ENCODE measurements at regions of chr3 and their contacts with region 1.

Region 1: DNA sequence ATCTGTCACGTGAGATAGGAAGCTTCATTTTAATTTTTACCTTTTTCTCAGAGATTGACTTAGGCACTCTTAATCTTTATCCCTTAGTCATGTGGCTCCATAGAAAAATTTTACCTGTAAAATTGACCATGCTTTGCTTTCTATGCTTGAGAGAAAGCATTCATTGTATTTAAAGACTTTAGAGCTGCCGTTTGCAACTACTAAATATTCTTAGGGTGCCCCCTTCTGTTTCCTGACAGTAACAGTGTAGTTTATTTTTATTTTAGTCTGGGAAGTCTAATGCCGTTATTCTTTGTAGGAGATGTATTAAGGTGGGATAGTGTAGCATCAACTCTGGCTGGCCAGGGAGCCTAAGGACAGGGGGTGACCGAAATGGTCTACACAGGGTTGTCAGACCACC is 84.5 kb upstream of the SYNPR start:
- DNase-seq: no peak
- ATAC-seq: no peak
- H3K4me3 Mint-ChIP-seq: no peak overlapping the region
- H3K27ac Mint-ChIP-seq: no peak overlapping the region
- H3K4me1 Mint-ChIP-seq: no peaks in the 10 kb centered on the region
- H3K27me3 Mint-ChIP-seq: peaks cover 5% of the 10 kb centered on the region
- CTCF ChIP-seq: no peak

Region 2: DNA sequence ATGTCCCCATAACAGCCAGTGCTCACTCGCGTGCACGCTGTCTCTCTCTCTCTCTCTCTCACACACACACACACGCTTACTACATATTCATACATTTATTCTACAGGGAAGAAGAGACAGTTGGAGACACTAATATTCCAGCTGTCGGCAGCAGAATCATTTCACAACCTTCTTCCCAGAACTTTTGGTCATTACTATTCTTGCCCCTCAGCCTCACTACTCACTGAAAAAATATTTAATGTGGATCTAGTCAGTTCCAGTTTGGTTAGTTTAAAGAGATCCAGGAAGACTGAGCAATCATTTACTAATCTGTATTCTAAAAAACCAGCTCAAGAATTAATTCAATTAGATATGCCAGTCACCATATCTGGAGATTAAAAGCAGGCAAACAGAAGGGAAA is 1237.4 kb before region 1 on chr3:
- CTCF ChIA-PET with region 1: no interaction called
- POLR2A ChIA-PET with region 1: no interaction called
- intact Hi-C with region 1: no loop called
- DNase-seq: no peak
- ATAC-seq: no peak
- H3K4me3 Mint-ChIP-seq: no peak overlapping the region
- H3K27ac Mint-ChIP-seq: no peak overlapping the region
- H3K4me1 Mint-ChIP-seq: no peaks in the 10 kb centered on the region
- H3K27me3 Mint-ChIP-seq: no peaks in the 10 kb centered on the region
- CTCF ChIP-seq: no peak

Region 3: DNA sequence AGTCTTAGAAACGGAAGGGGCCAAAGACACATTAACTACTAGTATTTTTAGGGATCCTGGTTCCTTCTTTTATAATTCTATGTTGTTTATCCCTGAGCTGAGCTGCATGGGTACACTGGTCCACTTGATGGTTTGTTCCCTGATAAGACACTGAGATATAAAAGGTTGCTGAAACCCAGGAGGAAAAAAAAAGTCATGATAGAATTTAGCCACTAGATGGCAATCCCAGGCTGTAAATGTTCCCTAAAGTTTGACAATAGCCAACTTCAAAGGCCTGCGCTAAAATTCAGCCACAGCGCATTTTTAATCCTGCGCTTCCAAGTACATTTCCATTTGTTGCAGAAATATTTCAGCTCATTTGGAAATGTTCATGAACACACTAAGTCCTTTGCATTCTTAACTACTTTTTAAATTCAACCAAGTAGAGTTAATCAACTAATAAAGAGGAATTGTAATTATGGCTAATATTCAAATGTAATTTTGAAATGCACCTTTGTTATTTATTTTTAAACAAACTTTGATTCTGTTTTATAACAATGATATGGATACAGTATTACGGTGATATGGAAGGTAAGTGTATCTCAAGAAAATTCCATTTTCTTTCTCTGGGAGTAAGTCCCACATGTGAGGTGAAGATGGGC is 571.0 kb before region 1 on chr3:
- CTCF ChIA-PET with region 1: no interaction called
- POLR2A ChIA-PET with region 1: no interaction called
- intact Hi-C with region 1: loop called (anchors 2 kb)
- DNase-seq: no peak
- ATAC-seq: no peak
- H3K4me3 Mint-ChIP-seq: no peak overlapping the region
- H3K27ac Mint-ChIP-seq: no peak overlapping the region
- H3K4me1 Mint-ChIP-seq: peaks cover 2% of the 10 kb centered on the region
- H3K27me3 Mint-ChIP-seq: no peaks in the 10 kb centered on the region
- CTCF ChIP-seq: no peak

Region 4: DNA sequence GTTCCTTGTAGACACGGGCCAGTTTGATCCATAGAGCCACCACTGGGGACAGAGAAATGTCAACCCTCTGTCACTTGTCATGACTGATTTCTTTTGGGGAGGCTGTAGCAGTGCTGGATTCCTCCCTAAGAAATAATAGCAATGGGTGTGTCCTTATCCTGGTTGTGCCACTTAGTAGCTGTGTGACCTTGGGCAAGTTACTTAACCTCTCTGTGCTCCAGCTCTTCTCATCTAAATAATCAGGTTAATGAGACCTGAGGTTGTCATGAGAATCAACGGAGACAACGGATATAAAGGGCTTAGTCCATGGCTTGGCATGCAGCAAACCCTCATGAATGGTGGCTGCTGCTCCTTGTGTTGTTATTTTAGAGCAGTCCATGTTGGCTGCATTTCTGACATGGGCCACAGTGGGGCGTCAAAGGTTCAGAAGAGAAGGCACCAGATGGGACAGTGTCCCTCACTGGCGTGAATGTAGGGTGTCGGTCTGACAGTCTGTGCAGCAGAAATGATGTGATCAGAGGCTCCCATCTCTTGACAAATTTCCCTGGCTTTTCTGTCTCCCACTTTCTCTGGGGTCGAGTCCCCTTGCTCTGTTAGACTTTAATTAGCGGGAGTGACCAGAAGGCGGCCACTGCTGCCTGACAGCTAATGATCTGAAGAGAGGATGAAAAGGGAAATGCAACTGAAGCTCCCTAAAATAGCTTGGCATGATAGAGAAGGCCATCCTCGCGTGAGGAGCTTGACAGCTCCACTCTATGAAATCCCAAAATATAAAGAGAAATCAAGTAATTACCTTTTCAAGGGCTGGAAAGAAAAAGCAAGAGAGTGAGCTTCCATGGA is 527.8 kb before region 1 on chr3:
- CTCF ChIA-PET with region 1: interaction called, 3 read pairs
- POLR2A ChIA-PET with region 1: no interaction called
- intact Hi-C with region 1: loop called (anchors 2 kb)
- DNase-seq: no peak
- ATAC-seq: no peak
- H3K4me3 Mint-ChIP-seq: no peak overlapping the region
- H3K27ac Mint-ChIP-seq: no peak overlapping the region
- H3K4me1 Mint-ChIP-seq: no peaks in the 10 kb centered on the region
- H3K27me3 Mint-ChIP-seq: no peaks in the 10 kb centered on the region
- CTCF ChIP-seq: no peak

Region 5: GRCh38 chr3:62873761-62874647 is 319.6 kb before region 1 on chr3:
- CTCF ChIA-PET with region 1: no interaction called
- POLR2A ChIA-PET with region 1: no interaction called
- intact Hi-C with region 1: loop called (anchors 5 kb)
- DNase-seq: no peak
- ATAC-seq: no peak
- H3K4me3 Mint-ChIP-seq: peak overlapping the region; percentile 74
- H3K27ac Mint-ChIP-seq: no peak overlapping the region
- H3K4me1 Mint-ChIP-seq: peaks cover 2% of the 10 kb centered on the region
- H3K27me3 Mint-ChIP-seq: peaks cover 43% of the 10 kb centered on the region
- CTCF ChIP-seq: no peak